ENCODE measurements at regions of chr5 and their contacts with region 1.

Region 1: DNA sequence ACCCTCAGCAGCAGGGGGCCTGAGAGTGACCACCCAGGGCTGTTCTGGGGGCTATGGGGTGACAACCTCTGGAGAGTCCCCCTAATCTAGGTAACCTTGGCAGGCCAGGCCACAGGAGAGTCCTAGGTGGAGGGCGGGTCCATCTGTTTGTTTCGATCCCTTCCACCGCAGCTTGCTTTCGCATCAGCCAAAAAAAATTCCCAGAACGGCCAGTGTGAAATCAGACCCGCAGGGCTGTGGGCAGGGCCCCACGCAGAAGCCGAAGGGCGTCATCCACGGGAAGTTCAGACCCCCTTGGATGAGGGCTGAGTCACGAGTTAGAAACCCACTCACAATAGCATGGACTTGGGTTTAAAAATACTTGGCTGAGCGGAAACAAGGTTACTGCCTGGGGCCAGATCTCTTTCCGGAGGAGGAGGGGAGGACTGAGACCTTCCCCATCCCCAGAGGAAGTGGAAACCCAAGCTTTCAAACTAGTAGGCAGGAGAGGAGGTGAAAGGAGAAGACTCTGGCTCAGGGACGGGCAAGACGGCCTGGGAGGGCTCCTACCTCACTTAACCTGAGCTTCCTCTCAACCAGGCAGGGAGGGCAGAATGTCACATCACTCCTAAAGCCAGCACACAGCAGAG is 8.5 kb downstream of the STK10 start:
- DNase-seq: peak; percentile 44 to 73 (median 59)
- H3K4me3 ChIP-seq: peak overlapping the region; percentile 86
- H3K4me3 Mint-ChIP-seq: peak overlapping the region; percentile 86 to 96 (median 93)
- H3K27ac ChIP-seq: peak overlapping the region; percentile 94
- H3K27ac Mint-ChIP-seq: peak overlapping the region; percentile 97 to 100 (median 98)
- H3K4me1 ChIP-seq: peaks cover 94% of the 10 kb centered on the region
- H3K4me1 Mint-ChIP-seq: peaks cover 82 to 95% (median 95%) of the 10 kb centered on the region in 3 donors
- H3K27me3 ChIP-seq: no peaks in the 10 kb centered on the region
- H3K27me3 Mint-ChIP-seq: no peaks in the 10 kb centered on the region

Region 2: GRCh38 chr5:172006321-172007174 is 172.9 kb before region 1 on chr5 and contains the start of gene FBXW11:
- CTCF ChIA-PET with region 1: interaction called, 7 read pairs
- POLR2A ChIA-PET with region 1: interaction called, 11 read pairs
- DNase-seq: peak; percentile 93 to 98 (median 94)
- H3K4me3 ChIP-seq: peak within 1 kb of the TSS; percentile 100
- H3K4me3 Mint-ChIP-seq: peak within 1 kb of the TSS; percentile 89 to 97 (median 95)
- H3K27ac ChIP-seq: peak within 1 kb of the TSS; percentile 97
- H3K27ac Mint-ChIP-seq: peak within 1 kb of the TSS; percentile 89 to 100 (median 98)
- H3K4me1 ChIP-seq: peaks cover 49% of the 10 kb centered on the region
- H3K4me1 Mint-ChIP-seq: peaks cover 48 to 59% (median 56%) of the 10 kb centered on the region in 3 donors
- H3K27me3 ChIP-seq: no peaks in the 10 kb centered on the region
- H3K27me3 Mint-ChIP-seq: no peaks in the 10 kb centered on the region
- total RNA-seq, gene FBXW11: 44.7 to 46.9 TPM

Region 3: GRCh38 chr5:172078726-172079345 is 100.6 kb before region 1 on chr5:
- CTCF ChIA-PET with region 1: no interaction called
- POLR2A ChIA-PET with region 1: no interaction called
- DNase-seq: no peak
- H3K4me3 ChIP-seq: no peak overlapping the region
- H3K4me3 Mint-ChIP-seq: no peak overlapping the region
- H3K27ac ChIP-seq: no peak overlapping the region
- H3K27ac Mint-ChIP-seq: peak overlapping the region; percentile 42 to 79 (median 70)
- H3K4me1 ChIP-seq: no peaks in the 10 kb centered on the region
- H3K4me1 Mint-ChIP-seq: peaks cover 13 to 21% (median 20%) of the 10 kb centered on the region in 3 donors
- H3K27me3 ChIP-seq: no peaks in the 10 kb centered on the region
- H3K27me3 Mint-ChIP-seq: no peaks in the 10 kb centered on the region

Region 4: GRCh38 chr5:172106511-172107356 is 72.7 kb before region 1 on chr5:
- CTCF ChIA-PET with region 1: interaction called, 177 read pairs
- POLR2A ChIA-PET with region 1: interaction called, 38 read pairs
- DNase-seq: peak; percentile 51 to 75 (median 59)
- H3K4me3 ChIP-seq: no peak overlapping the region
- H3K4me3 Mint-ChIP-seq: peak overlapping the region in 5 of 7 donors; percentile 6 to 53 (median 43)
- H3K27ac ChIP-seq: no peak overlapping the region
- H3K27ac Mint-ChIP-seq: peak overlapping the region; percentile 73 to 89 (median 82)
- H3K4me1 ChIP-seq: peaks cover 38% of the 10 kb centered on the region
- H3K4me1 Mint-ChIP-seq: peaks cover 41 to 60% (median 52%) of the 10 kb centered on the region in 3 donors
- H3K27me3 ChIP-seq: no peaks in the 10 kb centered on the region
- H3K27me3 Mint-ChIP-seq: peaks cover 0 to 4% of the 10 kb centered on the region in 2 donors

Region 5: DNA sequence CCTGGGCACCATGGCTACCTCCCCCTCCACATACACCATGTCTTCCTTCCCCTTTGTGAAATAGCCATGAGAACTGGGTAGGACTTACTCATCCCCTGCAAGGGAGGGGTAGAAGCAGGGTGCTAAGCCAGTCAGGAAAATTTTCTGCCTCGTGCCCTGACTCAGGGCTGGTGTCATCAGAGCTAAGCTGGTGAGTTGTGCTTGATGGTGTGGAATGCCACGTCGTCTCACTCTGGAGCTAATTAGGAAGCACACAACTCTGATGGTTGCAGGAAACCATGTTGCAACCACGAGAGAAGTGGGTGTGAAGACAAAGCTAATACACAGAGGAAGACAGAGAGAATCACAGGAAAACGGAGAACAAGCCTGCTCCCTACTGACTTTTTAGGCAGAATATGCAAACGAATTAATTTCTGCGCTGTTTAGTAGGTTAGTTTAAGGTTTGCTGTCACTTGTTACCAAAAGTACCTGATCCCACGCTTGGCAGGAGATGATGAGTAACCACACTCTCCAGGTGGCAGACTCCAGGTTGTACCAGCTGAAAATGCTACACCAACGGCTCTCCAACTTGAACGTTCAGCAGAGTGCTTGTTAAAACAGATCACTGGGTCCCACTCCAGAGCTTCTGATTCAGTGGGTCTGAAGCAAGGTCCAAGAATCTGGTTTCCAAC is 46.0 kb before region 1 on chr5:
- CTCF ChIA-PET with region 1: interaction called, 17 read pairs
- POLR2A ChIA-PET with region 1: interaction called, 5 read pairs
- DNase-seq: peak in 1 of 5 donors; percentile 63
- H3K4me3 ChIP-seq: no peak overlapping the region
- H3K4me3 Mint-ChIP-seq: peak overlapping the region in 6 of 7 donors; percentile 58 to 77 (median 70)
- H3K27ac ChIP-seq: no peak overlapping the region
- H3K27ac Mint-ChIP-seq: peak overlapping the region; percentile 70 to 97 (median 85)
- H3K4me1 ChIP-seq: peaks cover 37% of the 10 kb centered on the region
- H3K4me1 Mint-ChIP-seq: peaks cover 66 to 86% (median 79%) of the 10 kb centered on the region in 3 donors
- H3K27me3 ChIP-seq: no peaks in the 10 kb centered on the region
- H3K27me3 Mint-ChIP-seq: peaks cover 0 to 2% of the 10 kb centered on the region in 2 donors

Region 6: GRCh38 chr5:172162323-172162986 is 17.0 kb before region 1 on chr5:
- CTCF ChIA-PET with region 1: interaction called, 340 read pairs
- POLR2A ChIA-PET with region 1: interaction called, 12 read pairs
- DNase-seq: no peak
- H3K4me3 ChIP-seq: no peak overlapping the region
- H3K4me3 Mint-ChIP-seq: peak overlapping the region in 5 of 7 donors; percentile 26 to 85 (median 54)
- H3K27ac ChIP-seq: no peak overlapping the region
- H3K27ac Mint-ChIP-seq: peak overlapping the region; percentile 19 to 94 (median 85)
- H3K4me1 ChIP-seq: peaks cover 85% of the 10 kb centered on the region
- H3K4me1 Mint-ChIP-seq: peaks cover 69 to 89% (median 82%) of the 10 kb centered on the region in 3 donors
- H3K27me3 ChIP-seq: no peaks in the 10 kb centered on the region
- H3K27me3 Mint-ChIP-seq: no peaks in the 10 kb centered on the region